Heart right ventricle (tissue), 16 donors: ENCODE measurements at regions of chr11 and their contacts with region 1.

Region 1: DNA sequence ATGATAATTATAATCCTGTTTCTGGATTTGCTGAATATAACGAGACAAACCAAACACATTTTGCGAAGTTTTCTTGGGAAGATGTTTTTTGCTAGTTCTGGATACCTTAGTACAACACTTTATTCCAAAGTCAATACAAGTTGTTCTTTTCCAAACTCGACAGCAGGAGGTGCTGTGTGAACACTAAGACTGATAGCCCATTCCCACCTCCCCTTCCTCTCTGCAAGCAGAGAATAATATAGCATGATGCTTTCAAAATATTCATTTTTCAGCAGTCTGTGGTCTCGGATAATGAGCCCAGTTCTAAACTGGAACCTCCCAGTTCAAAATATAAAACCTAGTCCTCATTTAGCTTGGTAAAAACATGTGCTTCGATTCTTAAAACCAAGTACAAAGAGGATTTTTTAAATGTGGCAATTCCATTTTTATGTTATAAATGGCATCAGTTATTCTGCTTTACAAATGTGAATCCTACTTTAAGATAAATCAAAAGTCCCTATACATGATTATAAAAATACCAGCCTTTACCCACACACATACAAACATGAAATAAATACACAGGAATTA is 129.1 kb downstream of the DCDC1 start:
- DNase-seq: peak in 1 of 2 donors; percentile 9
- ATAC-seq: peak in 1 of 8 donors; percentile 53
- H3K4me3 ChIP-seq: no peak overlapping the region
- H3K27ac ChIP-seq: no peak overlapping the region
- H3K4me1 ChIP-seq: no peaks in the 10 kb centered on the region
- H3K27me3 ChIP-seq: no peaks in the 10 kb centered on the region
- CTCF ChIP-seq: peak in 7 of 9 donors; percentile 44 to 66 (median 59)

Region 2: GRCh38 chr11:30377347-30377746 is 863.1 kb before region 1 on chr11:
- intact Hi-C with region 1: no loop called
- DNase-seq: no peak
- ATAC-seq: no peak
- H3K4me3 ChIP-seq: no peak overlapping the region
- H3K27ac ChIP-seq: no peak overlapping the region
- H3K4me1 ChIP-seq: no peaks in the 10 kb centered on the region
- H3K27me3 ChIP-seq: no peaks in the 10 kb centered on the region
- CTCF ChIP-seq: no peak

Region 3: GRCh38 chr11:31369348-31370329 is 129.2 kb after region 1 on chr11 and contains the starts of genes DCDC1 and DNAJC24:
- intact Hi-C with region 1: loop called in 1 of 10 experiments (anchors 10 kb)
- DNase-seq: peak; percentile 91
- ATAC-seq: peak; percentile 99 to 100 (median 100)
- H3K4me3 ChIP-seq: peak within 1 kb of the TSS; percentile 43 to 84 (median 72)
- H3K27ac ChIP-seq: peak within 1 kb of the TSS in 9 of 10 donors; percentile 31 to 87 (median 71)
- H3K4me1 ChIP-seq: peaks cover 3 to 27% (median 19%) of the 10 kb centered on the region in 9 donors
- H3K27me3 ChIP-seq: peaks cover 0 to 11% (median 0%) of the 10 kb centered on the region in 7 donors
- CTCF ChIP-seq: no peak
- total RNA-seq, gene DCDC1: 0.09 to 0.18 TPM in 2 of 10 donors, not detected in the others
- total RNA-seq, gene DNAJC24: 12.8 to 23.2 (median 16.0) TPM